H1 (cell line): ENCODE measurements at regions of chr16 and their contacts with region 1.

Region 1: DNA sequence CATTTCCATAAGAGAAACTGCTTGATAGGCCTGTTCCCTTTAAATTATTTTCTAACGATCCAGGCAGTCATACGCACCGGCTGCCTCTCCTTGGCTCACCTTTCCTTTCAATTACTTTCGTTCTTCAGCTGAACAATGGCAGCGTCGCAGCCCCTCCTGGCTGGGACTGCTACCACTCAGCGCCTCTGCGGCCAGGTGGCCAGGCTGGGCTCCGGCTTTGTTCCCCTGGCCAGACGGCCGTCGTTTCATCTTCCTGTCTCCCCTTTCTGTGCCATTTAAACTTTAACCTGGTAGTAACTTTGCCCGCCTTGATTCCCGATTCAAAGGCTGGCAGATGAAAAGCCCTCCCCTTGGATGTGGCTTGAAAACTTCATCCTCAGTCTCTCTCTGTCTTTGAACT is 79.0 kb downstream of the C16orf78 start:
- DNase-seq: no peak
- H3K4me3 ChIP-seq: no peak overlapping the region
- H3K27ac ChIP-seq: no peak overlapping the region
- H3K4me1 ChIP-seq: peaks cover 0 to 9% (median 3%) of the 10 kb centered on the region in 4 experiments; a peak in 6 of 7 replicates
- H3K27me3 ChIP-seq: no peaks in the 10 kb centered on the region; a peak in 2 of 7 replicates
- CTCF ChIP-seq: no peak
- EP300 ChIP-seq: no peak
- POLR2A ChIP-seq: no peak
- RAD21 ChIP-seq: 0 out of 4 replicates have a peak, but pooled peaks of 1 of the 2 experiments have one; percentile 2

Region 2: GRCh38 chr16:49419006-49419405 is 33.6 kb before region 1 on chr16:
- CTCF ChIA-PET with region 1: no interaction called
- POLR2A ChIA-PET with region 1: no interaction called
- DNase-seq: no peak
- H3K4me3 ChIP-seq: no peak overlapping the region
- H3K27ac ChIP-seq: no peak overlapping the region
- H3K4me1 ChIP-seq: no peaks in the 10 kb centered on the region
- H3K27me3 ChIP-seq: no peaks in the 10 kb centered on the region; a peak in 1 of 7 replicates
- CTCF ChIP-seq: no peak
- EP300 ChIP-seq: no peak
- POLR2A ChIP-seq: no peak
- RAD21 ChIP-seq: no peak

Region 3: GRCh38 chr16:49441366-49441780 is 11.2 kb before region 1 on chr16:
- CTCF ChIA-PET with region 1: interaction called, 11 read pairs
- POLR2A ChIA-PET with region 1: interaction called, 3 read pairs
- DNase-seq: peak in 1 of 2 experiments; percentile 68
- H3K4me3 ChIP-seq: no peak overlapping the region
- H3K27ac ChIP-seq: no peak overlapping the region
- H3K4me1 ChIP-seq: peaks cover 8 to 23% (median 18%) of the 10 kb centered on the region in 4 experiments
- H3K27me3 ChIP-seq: no peaks in the 10 kb centered on the region; a peak in 1 of 7 replicates
- CTCF ChIP-seq: peak in 2 of 3 experiments; percentile 53 to 63; a peak in 2 of 4 replicates
- EP300 ChIP-seq: no peak
- POLR2A ChIP-seq: no peak
- RAD21 ChIP-seq: peak; percentile 56 to 59

Region 4: DNA sequence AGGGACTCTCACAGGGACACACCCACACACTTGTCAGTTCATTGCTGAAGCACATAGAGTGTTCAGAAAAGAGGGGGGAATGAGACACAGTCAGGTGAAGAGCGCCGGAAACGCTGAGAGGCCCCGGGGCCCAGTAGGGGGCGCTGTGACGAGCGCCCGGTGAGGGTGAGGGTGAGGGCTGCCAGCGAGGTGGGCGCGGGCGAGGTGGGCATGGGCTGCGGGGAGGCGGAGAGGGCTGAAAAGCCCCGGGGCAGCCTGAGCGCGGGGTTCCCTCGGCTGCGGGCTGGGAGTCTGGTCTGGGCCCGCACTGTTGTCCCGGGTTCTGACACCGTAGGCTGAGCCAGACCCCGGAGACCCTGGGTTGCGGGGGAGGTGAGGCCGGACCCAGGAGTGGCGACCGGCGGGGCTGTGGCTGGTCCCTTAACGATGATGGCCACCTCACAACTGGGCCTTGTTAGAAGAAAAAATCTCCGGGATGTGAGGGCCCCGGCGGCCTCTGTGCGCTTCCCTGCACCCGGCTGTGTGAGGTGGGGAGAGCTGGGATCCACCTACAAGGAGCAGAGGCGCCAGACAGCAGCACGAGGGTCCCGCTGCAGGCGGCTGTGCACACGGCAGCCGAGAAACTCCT is 12.4 kb after region 1 on chr16:
- CTCF ChIA-PET with region 1: interaction called, 20 read pairs
- POLR2A ChIA-PET with region 1: interaction called, 3 read pairs
- DNase-seq: peak in 1 of 2 experiments; percentile 88
- H3K4me3 ChIP-seq: peak overlapping the region; percentile 38 to 65 (median 53)
- H3K27ac ChIP-seq: no peak overlapping the region
- H3K4me1 ChIP-seq: peaks cover 0 to 3% (median 1%) of the 10 kb centered on the region in 4 experiments; a peak in 4 of 7 replicates
- H3K27me3 ChIP-seq: peaks cover 0 to 15% (median 12%) of the 10 kb centered on the region in 4 experiments; a peak in 6 of 7 replicates
- CTCF ChIP-seq: peak; percentile 78 to 81 (median 79)
- EP300 ChIP-seq: no peak
- POLR2A ChIP-seq: peak in 1 of 2 experiments; percentile 49; a peak in 1 of 3 replicates
- RAD21 ChIP-seq: peak; percentile 29 to 62; a peak in 2 of 4 replicates